A549 (cell line): ENCODE measurements at regions of chr22 and their contacts with region 1.

Region 1: GRCh38 chr22:24845041-24845898 is 39.3 kb downstream of the SGSM1 start:
- DNase-seq: peak in 1 of 2 experiments; percentile 20
- ATAC-seq: peak; percentile 68 to 80; a peak in 5 of 6 replicates
- H3K4me3 ChIP-seq: no peak overlapping the region
- H3K27ac ChIP-seq: peak overlapping the region in 1 of 2 experiments; percentile 36; a peak in 1 of 6 replicates
- H3K4me1 ChIP-seq: peaks cover 8% of the 10 kb centered on the region; the same call in 1 of the 3 replicates
- CTCF ChIP-seq: no peak
- EP300 ChIP-seq: no peak
- POLR2A ChIP-seq: no peak
- RAD21 ChIP-seq: no peak

Region 2: DNA sequence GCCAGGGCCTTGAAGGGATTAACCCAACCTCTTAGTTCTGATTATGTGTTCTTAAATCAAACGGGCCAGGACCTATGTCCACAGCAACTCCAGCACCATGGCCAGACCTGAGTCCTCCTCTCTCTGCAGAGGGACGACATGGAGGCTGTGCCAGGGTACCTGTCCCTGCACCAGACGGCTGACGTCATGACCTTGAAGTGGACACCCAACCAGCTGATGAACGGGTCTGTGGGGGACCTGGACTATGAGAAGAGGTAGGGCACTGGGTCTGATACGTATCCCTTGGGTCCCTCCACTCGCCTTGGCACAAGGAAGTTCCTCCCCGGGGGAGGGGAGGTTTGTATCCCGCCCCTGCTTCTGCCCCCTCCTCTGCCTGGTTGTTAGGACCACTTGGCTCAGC is 14.3 kb after region 1 on chr22:
- CTCF ChIA-PET with region 1: interaction called, 19 read pairs
- POLR2A ChIA-PET with region 1: no interaction called
- DNase-seq: no peak
- ATAC-seq: no peak
- H3K4me3 ChIP-seq: no peak overlapping the region
- H3K27ac ChIP-seq: no peak overlapping the region
- H3K4me1 ChIP-seq: no peaks in the 10 kb centered on the region
- CTCF ChIP-seq: no peak
- EP300 ChIP-seq: no peak
- POLR2A ChIP-seq: no peak
- RAD21 ChIP-seq: no peak

Region 3: DNA sequence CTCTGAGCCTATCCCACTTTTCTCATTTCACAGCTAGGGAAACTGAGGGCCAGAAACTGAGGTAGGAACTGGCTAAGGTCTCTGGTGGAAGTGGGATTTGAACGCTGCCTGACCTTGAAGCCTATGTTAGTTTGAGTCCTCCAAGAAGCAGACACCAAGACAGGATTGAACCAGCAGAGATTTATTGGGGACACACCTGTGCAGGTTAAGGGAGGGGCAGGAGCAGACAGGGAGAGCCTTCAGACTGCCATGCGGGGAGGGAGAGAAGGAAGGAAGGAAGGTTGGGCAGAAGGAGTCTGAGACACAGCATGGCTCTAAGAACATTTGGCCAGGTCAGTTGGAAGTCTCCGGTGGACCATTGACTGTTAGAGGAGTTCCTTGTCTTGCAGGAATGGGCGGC is 20.2 kb after region 1 on chr22:
- CTCF ChIA-PET with region 1: interaction called, 19 read pairs
- POLR2A ChIA-PET with region 1: no interaction called
- DNase-seq: no peak
- ATAC-seq: no peak
- H3K4me3 ChIP-seq: no peak overlapping the region
- H3K27ac ChIP-seq: no peak overlapping the region
- H3K4me1 ChIP-seq: no peaks in the 10 kb centered on the region
- CTCF ChIP-seq: no peak
- EP300 ChIP-seq: no peak
- POLR2A ChIP-seq: no peak
- RAD21 ChIP-seq: no peak

Region 4: DNA sequence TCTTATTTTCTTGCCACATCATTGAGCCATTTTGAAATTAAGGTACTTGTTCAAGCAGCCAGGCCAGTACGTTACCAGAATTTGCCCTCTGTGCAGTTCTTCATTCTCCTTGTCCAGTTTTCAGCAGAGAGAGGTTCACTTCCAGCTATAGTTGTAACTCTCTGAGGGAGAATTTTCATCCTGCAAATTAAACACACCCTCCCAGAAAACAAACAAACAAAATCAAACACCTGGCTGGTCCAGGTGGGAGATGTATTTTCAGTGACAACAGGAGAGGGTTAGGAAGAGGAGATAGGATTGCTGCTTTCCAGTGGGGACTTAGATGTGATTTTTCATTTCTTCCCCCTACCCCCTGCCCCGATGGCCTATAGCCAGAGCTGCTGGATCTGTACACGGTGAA is 56.2 kb after region 1 on chr22:
- CTCF ChIA-PET with region 1: no interaction called
- POLR2A ChIA-PET with region 1: no interaction called
- DNase-seq: no peak
- ATAC-seq: no peak
- H3K4me3 ChIP-seq: no peak overlapping the region
- H3K27ac ChIP-seq: no peak overlapping the region
- H3K4me1 ChIP-seq: peaks cover 2% of the 10 kb centered on the region; the same call in 2 of the 3 replicates
- CTCF ChIP-seq: no peak
- EP300 ChIP-seq: no peak
- POLR2A ChIP-seq: no peak
- RAD21 ChIP-seq: no peak